Activated CD4-positive, alpha-beta T cell treated with anti-CD3 and anti-CD28 coated beads for 36 hours (primary cell): ENCODE measurements at regions of chr1 and their contacts with region 1.

Region 1: GRCh38 chr1:230104395-230105244 is 37.6 kb downstream of the GALNT2 start:
- DNase-seq: peak; percentile 95
- ATAC-seq: peak; percentile 78
- H3K4me3 Mint-ChIP-seq: peak overlapping the region; percentile 44
- H3K27ac Mint-ChIP-seq: peak overlapping the region; percentile 92
- H3K4me1 Mint-ChIP-seq: peaks cover 86% of the 10 kb centered on the region
- H3K27me3 Mint-ChIP-seq: no peaks in the 10 kb centered on the region

Region 2: DNA sequence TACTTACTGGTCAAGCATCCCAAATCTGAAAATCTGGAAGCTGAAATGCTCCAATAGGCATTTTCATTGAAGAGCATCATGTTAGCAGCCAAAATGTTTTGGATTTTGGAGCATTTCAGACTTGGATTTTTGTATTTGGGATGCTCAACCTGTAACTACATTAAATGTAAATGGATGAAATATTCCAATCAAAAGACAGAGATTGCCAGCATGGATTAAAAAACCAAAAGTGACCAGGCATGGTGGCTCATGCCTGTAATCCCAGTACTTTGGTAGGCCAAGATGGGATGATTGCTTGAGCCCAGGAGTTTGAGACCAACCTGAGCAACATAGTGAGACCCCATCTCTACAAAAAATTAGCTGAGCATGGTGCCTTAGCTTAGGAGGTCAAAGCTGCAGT is 368.2 kb before region 1 on chr1:
- CTCF ChIA-PET with region 1: no interaction called
- POLR2A ChIA-PET with region 1: no interaction called
- intact Hi-C with region 1: loop called in 1 of 2 experiments (anchors 2 kb)
- DNase-seq: no peak
- ATAC-seq: no peak
- H3K4me3 Mint-ChIP-seq: no peak overlapping the region
- H3K27ac Mint-ChIP-seq: no peak overlapping the region
- H3K4me1 Mint-ChIP-seq: peaks cover 17% of the 10 kb centered on the region
- H3K27me3 Mint-ChIP-seq: peaks cover 4% of the 10 kb centered on the region

Region 3: GRCh38 chr1:229952670-229953520 is 151.7 kb before region 1 on chr1:
- CTCF ChIA-PET with region 1: no interaction called
- POLR2A ChIA-PET with region 1: no interaction called
- intact Hi-C with region 1: no loop called
- DNase-seq: no peak
- ATAC-seq: no peak
- H3K4me3 Mint-ChIP-seq: no peak overlapping the region
- H3K27ac Mint-ChIP-seq: no peak overlapping the region
- H3K4me1 Mint-ChIP-seq: peaks cover 12% of the 10 kb centered on the region
- H3K27me3 Mint-ChIP-seq: peaks cover 4% of the 10 kb centered on the region

Region 4: GRCh38 chr1:230123280-230124185 is 18.9 kb after region 1 on chr1:
- CTCF ChIA-PET with region 1: interaction called, 6 read pairs
- POLR2A ChIA-PET with region 1: interaction called, 6 read pairs
- intact Hi-C with region 1: loop called in 1 of 2 experiments (anchors 1 kb)
- DNase-seq: peak; percentile 57
- ATAC-seq: peak; percentile 49
- H3K4me3 Mint-ChIP-seq: no peak overlapping the region
- H3K27ac Mint-ChIP-seq: peak overlapping the region; percentile 53
- H3K4me1 Mint-ChIP-seq: peaks cover 69% of the 10 kb centered on the region
- H3K27me3 Mint-ChIP-seq: no peaks in the 10 kb centered on the region